H1 (cell line): ENCODE measurements at regions of chr3 and their contacts with region 1.

Region 1: GRCh38 chr3:38627956-38628355 is 21.5 kb downstream of the SCN5A start:
- DNase-seq: peak in 1 of 2 experiments; percentile 89
- H3K4me3 ChIP-seq: no peak overlapping the region
- H3K27ac ChIP-seq: no peak overlapping the region
- H3K4me1 ChIP-seq: peaks cover 0 to 16% (median 4%) of the 10 kb centered on the region in 4 experiments; a peak in 6 of 7 replicates
- H3K27me3 ChIP-seq: no peaks in the 10 kb centered on the region
- CTCF ChIP-seq: peak in 2 of 3 experiments; percentile 94 to 98; a peak in 3 of 4 replicates
- EP300 ChIP-seq: no peak
- POLR2A ChIP-seq: no peak
- RAD21 ChIP-seq: peak; percentile 74 to 83

Region 2: DNA sequence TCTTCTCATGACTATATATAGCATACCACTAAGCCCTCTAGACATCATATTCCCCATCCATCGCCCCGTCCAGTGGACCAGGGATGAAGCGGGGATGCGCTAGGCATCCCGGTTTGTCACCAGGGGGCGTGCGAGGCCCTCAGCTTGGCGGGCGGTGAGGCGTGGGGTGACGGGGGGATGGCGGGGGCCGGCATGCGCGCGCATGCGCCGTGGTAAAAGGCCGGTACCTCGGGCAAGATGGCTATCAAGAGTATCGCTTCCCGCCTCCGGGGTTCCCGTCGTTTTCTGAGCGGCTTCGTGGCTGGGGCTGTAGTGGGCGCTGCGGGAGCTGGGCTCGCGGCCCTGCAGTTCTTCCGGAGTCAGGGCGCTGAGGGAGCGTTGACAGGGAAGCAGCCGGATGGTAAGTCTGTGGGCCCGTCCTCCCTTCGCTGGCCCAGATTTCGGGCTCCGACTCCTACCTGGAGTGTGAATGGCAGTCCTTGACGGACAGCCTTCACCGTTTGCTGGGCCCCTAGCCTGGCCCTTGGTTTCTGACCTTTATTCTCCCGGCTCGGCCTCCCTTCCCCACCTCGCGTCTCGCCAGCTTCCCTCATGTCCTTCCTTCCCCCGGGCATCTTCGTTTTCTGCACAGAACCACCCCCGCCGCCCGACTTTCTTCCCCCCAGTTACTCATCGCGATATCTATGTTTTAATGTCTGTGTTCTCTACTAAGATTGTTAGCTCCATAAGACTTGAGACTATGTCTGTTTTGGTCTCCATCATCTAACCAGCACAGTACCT is 131.6 kb before region 1 on chr3 and contains the start of gene EXOG:
- CTCF ChIA-PET with region 1: interaction called, 12 read pairs
- POLR2A ChIA-PET with region 1: no interaction called
- DNase-seq: peak; percentile 82 to 98
- H3K4me3 ChIP-seq: peak within 1 kb of the TSS; percentile 51 to 85 (median 69)
- H3K27ac ChIP-seq: peak within 1 kb of the TSS; percentile 88
- H3K4me1 ChIP-seq: peaks cover 0 to 2% (median 0%) of the 10 kb centered on the region in 4 experiments; a peak in 1 of 7 replicates
- H3K27me3 ChIP-seq: no peaks in the 10 kb centered on the region
- CTCF ChIP-seq: peak; percentile 75 to 96 (median 84)
- EP300 ChIP-seq: 0 out of 3 replicates have a peak, but pooled peaks of 1 of the 2 experiments have one; percentile 31
- POLR2A ChIP-seq: peak; percentile 72 to 88
- RAD21 ChIP-seq: peak; percentile 56 to 77; a peak in 3 of 4 replicates
- total RNA-seq, gene EXOG: 12.2 and 12.9 TPM in 2 replicates

Region 3: DNA sequence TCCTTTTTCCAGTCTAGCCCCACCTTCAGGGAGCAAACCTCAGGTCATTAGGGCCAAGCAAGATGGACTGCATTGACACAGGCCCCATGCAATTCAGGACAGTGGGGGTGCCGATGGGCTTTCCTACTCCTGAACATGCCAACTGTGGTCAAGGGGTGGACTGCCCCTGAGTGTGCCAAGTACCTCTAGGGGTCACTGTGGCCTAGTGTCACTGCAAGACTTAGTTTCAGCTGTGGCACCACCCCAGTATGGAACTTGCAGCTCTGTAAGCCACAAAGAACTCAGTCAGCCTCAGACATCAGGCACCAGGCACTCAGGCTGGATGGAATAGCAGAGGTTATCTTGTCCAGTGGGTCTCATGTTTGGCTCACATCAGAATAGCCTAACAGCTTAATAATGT is 99.5 kb before region 1 on chr3:
- CTCF ChIA-PET with region 1: interaction called, 249 read pairs
- POLR2A ChIA-PET with region 1: no interaction called
- DNase-seq: no peak
- H3K4me3 ChIP-seq: no peak overlapping the region
- H3K27ac ChIP-seq: no peak overlapping the region
- H3K4me1 ChIP-seq: peaks cover 0 to 10% (median 4%) of the 10 kb centered on the region in 4 experiments; a peak in 4 of 7 replicates
- H3K27me3 ChIP-seq: no peaks in the 10 kb centered on the region
- CTCF ChIP-seq: peak; percentile 64 to 79 (median 64)
- EP300 ChIP-seq: no peak
- POLR2A ChIP-seq: no peak
- RAD21 ChIP-seq: peak; percentile 66 to 78

Region 4: GRCh38 chr3:38560284-38560683 is 67.7 kb before region 1 on chr3:
- CTCF ChIA-PET with region 1: interaction called, 10 read pairs
- POLR2A ChIA-PET with region 1: no interaction called
- DNase-seq: no peak
- H3K4me3 ChIP-seq: no peak overlapping the region
- H3K27ac ChIP-seq: no peak overlapping the region
- H3K4me1 ChIP-seq: no peaks in the 10 kb centered on the region
- H3K27me3 ChIP-seq: no peaks in the 10 kb centered on the region
- CTCF ChIP-seq: peak in 2 of 3 experiments; percentile 32 to 37; a peak in 2 of 4 replicates
- EP300 ChIP-seq: no peak
- POLR2A ChIP-seq: no peak
- RAD21 ChIP-seq: no peak

Region 5: DNA sequence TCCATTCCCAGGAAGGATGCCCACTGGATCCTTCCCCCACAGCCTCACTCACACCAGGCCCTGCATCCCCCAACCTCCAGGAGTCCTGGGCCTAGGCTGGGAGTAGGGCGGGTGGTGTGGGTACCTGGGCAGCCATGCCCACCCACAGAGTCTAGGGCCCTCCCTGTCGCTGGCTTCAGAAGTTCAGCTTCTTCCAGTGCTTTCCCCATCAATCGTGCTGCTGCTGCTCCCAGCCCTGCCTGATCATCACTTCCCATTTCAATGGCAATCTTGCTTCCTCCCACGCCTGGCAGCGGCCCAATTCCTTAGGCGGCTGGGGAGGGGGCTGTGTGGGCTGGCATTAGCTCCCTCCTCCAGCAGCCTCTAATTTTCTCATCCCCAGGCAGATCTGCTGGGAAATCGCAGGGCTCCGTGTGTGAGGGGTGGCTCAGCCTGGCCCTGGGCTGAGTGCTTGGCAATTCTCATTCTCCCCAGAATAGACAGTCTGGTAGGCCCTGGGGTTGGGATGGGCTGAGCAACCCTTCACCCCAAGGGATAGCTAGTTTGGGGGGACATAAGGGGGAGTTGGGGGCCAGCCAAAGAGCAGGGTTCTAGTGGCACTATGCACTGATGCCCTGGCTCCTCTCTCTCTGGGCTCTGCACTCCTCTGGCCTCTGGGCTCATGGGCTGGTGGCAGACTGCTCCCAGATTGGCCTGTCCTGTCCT is 44.9 kb before region 1 on chr3:
- CTCF ChIA-PET with region 1: no interaction called
- POLR2A ChIA-PET with region 1: no interaction called
- DNase-seq: peak in 1 of 2 experiments; percentile 27
- H3K4me3 ChIP-seq: no peak overlapping the region
- H3K27ac ChIP-seq: no peak overlapping the region
- H3K4me1 ChIP-seq: peaks cover 0 to 10% (median 0%) of the 10 kb centered on the region in 4 experiments; a peak in 2 of 7 replicates
- H3K27me3 ChIP-seq: no peaks in the 10 kb centered on the region; a peak in 2 of 7 replicates
- CTCF ChIP-seq: no peak
- EP300 ChIP-seq: no peak
- POLR2A ChIP-seq: no peak
- RAD21 ChIP-seq: no peak

Region 6: GRCh38 chr3:38608086-38608720 is 19.8 kb before region 1 on chr3:
- CTCF ChIA-PET with region 1: interaction called, 538 read pairs
- POLR2A ChIA-PET with region 1: no interaction called
- DNase-seq: no peak
- H3K4me3 ChIP-seq: no peak overlapping the region
- H3K27ac ChIP-seq: no peak overlapping the region
- H3K4me1 ChIP-seq: no peaks in the 10 kb centered on the region
- H3K27me3 ChIP-seq: no peaks in the 10 kb centered on the region
- CTCF ChIP-seq: no peak
- EP300 ChIP-seq: no peak
- POLR2A ChIP-seq: no peak
- RAD21 ChIP-seq: no peak